Panc1 (cell line): ENCODE measurements at regions of chr1 and their contacts with region 1.

Region 1: GRCh38 chr1:78101514-78101913 is 55.7 kb downstream of the GIPC2 start:
- DNase-seq: no peak
- ATAC-seq: peak; percentile 76
- H3K4me3 ChIP-seq: no peak overlapping the region
- H3K27ac ChIP-seq: no peak overlapping the region
- H3K4me1 ChIP-seq: peaks cover 4% of the 10 kb centered on the region; the same call in 1 of the 2 replicates
- H3K27me3 ChIP-seq: no peaks in the 10 kb centered on the region
- CTCF ChIP-seq: no peak

Region 2: GRCh38 chr1:78004719-78005447 is 96.6 kb before region 1 on chr1 and contains the start of gene DNAJB4:
- CTCF ChIA-PET with region 1: no interaction called
- POLR2A ChIA-PET with region 1: no interaction called
- in situ Hi-C with region 1: no loop called
- intact Hi-C with region 1: loop called (anchors 10 kb)
- DNase-seq: peak; percentile 94
- ATAC-seq: peak; percentile 99
- H3K4me3 ChIP-seq: peak within 1 kb of the TSS; percentile 55
- H3K27ac ChIP-seq: peak within 1 kb of the TSS; percentile 96
- H3K4me1 ChIP-seq: peaks cover 24% of the 10 kb centered on the region
- H3K27me3 ChIP-seq: no peaks in the 10 kb centered on the region
- CTCF ChIP-seq: no peak
- total RNA-seq, gene DNAJB4: 14.9 TPM